ENCODE measurements at regions of chr11 and their contacts with region 1.

Region 1: GRCh38 chr11:75204685-75205563 is 35.6 kb upstream of the TPBGL start:
- DNase-seq: peak; percentile 89
- ATAC-seq: peak; percentile 91
- H3K4me3 ChIP-seq: peak overlapping the region in 1 of 3 experiments; percentile 53; a peak in 2 of 6 replicates
- H3K27ac ChIP-seq: peak overlapping the region; percentile 91
- H3K4me1 ChIP-seq: peaks cover 32% of the 10 kb centered on the region
- H3K27me3 ChIP-seq: no peaks in the 10 kb centered on the region
- CTCF ChIP-seq: peak; percentile 99
- EP300 ChIP-seq: no peak
- POLR2A ChIP-seq: peak in 1 of 2 experiments; percentile 14; a peak in 1 of 4 replicates
- RAD21 ChIP-seq: peak; percentile 99

Region 2: GRCh38 chr11:74650498-74650897 is 554.4 kb before region 1 on chr11:
- CTCF ChIA-PET with region 1: no interaction called
- POLR2A ChIA-PET with region 1: no interaction called
- in situ Hi-C with region 1: no loop called
- intact Hi-C with region 1: no loop called
- DNase-seq: no peak
- ATAC-seq: no peak
- H3K4me3 ChIP-seq: no peak overlapping the region
- H3K27ac ChIP-seq: no peak overlapping the region
- H3K4me1 ChIP-seq: no peaks in the 10 kb centered on the region
- H3K27me3 ChIP-seq: no peaks in the 10 kb centered on the region
- CTCF ChIP-seq: no peak
- EP300 ChIP-seq: no peak
- POLR2A ChIP-seq: no peak
- RAD21 ChIP-seq: no peak

Region 3: DNA sequence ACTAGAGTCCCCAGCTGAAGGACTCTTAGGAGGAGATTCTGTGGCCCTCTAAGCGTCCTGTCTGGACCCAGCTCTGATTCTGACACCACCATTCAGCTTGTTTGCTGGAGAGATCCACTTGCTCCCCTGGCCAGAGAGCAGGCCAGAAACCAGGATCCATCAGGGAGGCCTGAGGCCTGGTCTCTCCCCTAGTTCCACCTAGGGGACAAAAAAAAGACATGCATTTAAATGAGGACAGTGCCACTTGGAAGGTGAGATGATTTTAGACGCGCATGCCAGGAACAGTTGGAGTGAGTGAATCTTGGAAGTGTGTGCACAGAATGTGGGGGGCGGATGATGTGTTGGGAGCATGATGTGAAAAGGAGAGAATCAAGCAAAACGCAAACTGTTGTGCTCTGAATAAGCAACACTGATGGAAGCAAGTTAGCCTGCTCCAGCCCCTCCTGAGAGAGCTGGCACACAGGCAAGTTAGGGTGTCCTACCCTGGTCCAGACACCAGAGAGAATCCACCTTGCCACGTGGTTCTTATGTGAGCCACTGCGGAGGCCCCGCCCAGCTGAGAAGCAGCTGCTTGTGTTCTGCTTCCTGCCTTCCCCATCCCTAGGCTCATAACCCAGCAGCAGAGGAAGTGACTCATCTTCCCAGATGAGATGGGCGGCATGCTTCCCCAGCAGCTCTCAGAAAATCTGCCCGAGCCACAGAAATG is 62.1 kb before region 1 on chr11:
- CTCF ChIA-PET with region 1: interaction called, 173 read pairs
- POLR2A ChIA-PET with region 1: interaction called, 163 read pairs
- in situ Hi-C with region 1: loop called (anchors 5 kb)
- intact Hi-C with region 1: loop called (anchors 1 kb)
- DNase-seq: peak; percentile 72
- ATAC-seq: peak; percentile 52
- H3K4me3 ChIP-seq: no peak overlapping the region
- H3K27ac ChIP-seq: no peak overlapping the region
- H3K4me1 ChIP-seq: peaks cover 55% of the 10 kb centered on the region
- H3K27me3 ChIP-seq: peaks cover 1 to 6% of the 10 kb centered on the region in 2 experiments; a peak in 2 of 5 replicates
- CTCF ChIP-seq: no peak; the same call in 1 of the 2 replicates
- EP300 ChIP-seq: no peak
- POLR2A ChIP-seq: no peak
- RAD21 ChIP-seq: no peak

Region 4: GRCh38 chr11:75160192-75160757 is 44.6 kb before region 1 on chr11:
- CTCF ChIA-PET with region 1: interaction called, 6 read pairs
- POLR2A ChIA-PET with region 1: interaction called, 85 read pairs
- in situ Hi-C with region 1: no loop called
- intact Hi-C with region 1: loop called (anchors 5 kb)
- DNase-seq: no peak
- ATAC-seq: no peak
- H3K4me3 ChIP-seq: peak overlapping the region; percentile 9 to 61 (median 15); a peak in 4 of 6 replicates
- H3K27ac ChIP-seq: peak overlapping the region; percentile 89
- H3K4me1 ChIP-seq: peaks cover 100% of the 10 kb centered on the region
- H3K27me3 ChIP-seq: no peaks in the 10 kb centered on the region
- CTCF ChIP-seq: no peak
- EP300 ChIP-seq: no peak
- POLR2A ChIP-seq: no peak
- RAD21 ChIP-seq: no peak

Region 5: DNA sequence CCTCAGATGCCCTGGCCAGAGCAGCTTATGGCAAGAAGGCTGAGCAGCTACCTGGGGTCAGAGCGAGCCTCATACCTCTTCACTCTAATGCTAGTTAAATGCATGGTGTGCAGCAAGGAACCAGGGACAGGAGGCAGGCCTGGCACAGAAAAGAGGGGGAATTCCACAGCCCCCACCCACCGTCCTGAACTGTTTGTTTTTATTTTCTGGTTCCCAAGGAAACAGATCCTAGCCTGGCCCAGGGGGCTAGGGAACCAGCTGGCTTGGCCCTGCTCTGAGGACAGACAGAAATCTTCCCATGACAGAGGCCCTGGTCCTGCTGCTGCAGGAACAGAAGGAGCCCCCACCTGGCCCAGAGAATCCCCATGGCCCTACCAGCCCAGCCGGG is 13.6 kb before region 1 on chr11:
- CTCF ChIA-PET with region 1: no interaction called
- POLR2A ChIA-PET with region 1: interaction called, 12 read pairs
- in situ Hi-C with region 1: no loop called
- intact Hi-C with region 1: no loop called
- DNase-seq: no peak
- ATAC-seq: peak; percentile 73
- H3K4me3 ChIP-seq: no peak overlapping the region
- H3K27ac ChIP-seq: peak overlapping the region; percentile 63
- H3K4me1 ChIP-seq: peaks cover 26% of the 10 kb centered on the region
- H3K27me3 ChIP-seq: no peaks in the 10 kb centered on the region
- CTCF ChIP-seq: no peak
- EP300 ChIP-seq: no peak
- POLR2A ChIP-seq: no peak
- RAD21 ChIP-seq: no peak

Region 6: DNA sequence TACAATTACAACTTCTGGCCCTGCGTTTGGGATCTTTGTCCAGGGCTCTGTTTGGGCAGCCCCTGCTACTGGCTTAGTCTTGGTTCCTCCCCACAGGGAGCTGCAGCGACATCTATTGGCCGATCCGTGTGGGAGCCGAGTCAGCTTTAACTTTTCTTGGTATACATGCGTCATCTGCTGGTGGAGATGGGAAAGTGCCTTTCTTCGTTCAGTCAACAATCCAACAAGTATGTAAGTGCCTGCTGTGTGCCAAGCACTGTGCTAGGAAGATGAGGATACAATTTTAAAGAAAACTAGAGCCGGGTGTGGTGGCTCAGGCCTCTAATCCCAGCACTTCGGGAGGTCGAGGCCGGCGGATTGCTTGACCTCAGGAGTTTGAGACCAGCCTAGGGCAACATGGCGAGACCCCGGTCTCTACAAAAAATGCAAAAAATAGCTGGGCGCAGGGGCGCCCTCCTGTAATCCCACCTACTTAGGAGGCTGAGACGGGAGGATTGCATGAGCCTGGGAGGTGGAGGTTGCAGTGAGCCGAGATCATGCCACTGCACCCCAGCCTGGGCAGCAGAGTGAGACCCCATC is 43.9 kb after region 1 on chr11:
- CTCF ChIA-PET with region 1: interaction called, 11 read pairs
- POLR2A ChIA-PET with region 1: no interaction called
- in situ Hi-C with region 1: loop called (anchors 5 kb)
- intact Hi-C with region 1: loop called (anchors 2 kb)
- DNase-seq: peak; percentile 81
- ATAC-seq: peak; percentile 85
- H3K4me3 ChIP-seq: no peak overlapping the region; a peak in 1 of 6 replicates
- H3K27ac ChIP-seq: no peak overlapping the region
- H3K4me1 ChIP-seq: peaks cover 5% of the 10 kb centered on the region; the same call in 1 of the 2 replicates
- H3K27me3 ChIP-seq: peaks cover 2 to 26% of the 10 kb centered on the region in 2 experiments; a peak in 4 of 5 replicates
- CTCF ChIP-seq: peak; percentile 99
- EP300 ChIP-seq: no peak
- POLR2A ChIP-seq: no peak
- RAD21 ChIP-seq: peak; percentile 95

Measured in HepG2 (cell line).